A549 (cell line): ENCODE measurements at regions of chr15 and their contacts with region 1.

Region 1: GRCh38 chr15:60916679-60917460 is 312.2 kb downstream of the RORA start:
- DNase-seq: peak; percentile 35 to 80
- ATAC-seq: peak; percentile 89 to 98
- H3K4me3 ChIP-seq: no peak overlapping the region
- H3K27ac ChIP-seq: no peak overlapping the region
- H3K4me1 ChIP-seq: no peaks in the 10 kb centered on the region
- CTCF ChIP-seq: peak; percentile 86
- EP300 ChIP-seq: no peak
- POLR2A ChIP-seq: no peak
- RAD21 ChIP-seq: peak; percentile 73 to 74

Region 2: DNA sequence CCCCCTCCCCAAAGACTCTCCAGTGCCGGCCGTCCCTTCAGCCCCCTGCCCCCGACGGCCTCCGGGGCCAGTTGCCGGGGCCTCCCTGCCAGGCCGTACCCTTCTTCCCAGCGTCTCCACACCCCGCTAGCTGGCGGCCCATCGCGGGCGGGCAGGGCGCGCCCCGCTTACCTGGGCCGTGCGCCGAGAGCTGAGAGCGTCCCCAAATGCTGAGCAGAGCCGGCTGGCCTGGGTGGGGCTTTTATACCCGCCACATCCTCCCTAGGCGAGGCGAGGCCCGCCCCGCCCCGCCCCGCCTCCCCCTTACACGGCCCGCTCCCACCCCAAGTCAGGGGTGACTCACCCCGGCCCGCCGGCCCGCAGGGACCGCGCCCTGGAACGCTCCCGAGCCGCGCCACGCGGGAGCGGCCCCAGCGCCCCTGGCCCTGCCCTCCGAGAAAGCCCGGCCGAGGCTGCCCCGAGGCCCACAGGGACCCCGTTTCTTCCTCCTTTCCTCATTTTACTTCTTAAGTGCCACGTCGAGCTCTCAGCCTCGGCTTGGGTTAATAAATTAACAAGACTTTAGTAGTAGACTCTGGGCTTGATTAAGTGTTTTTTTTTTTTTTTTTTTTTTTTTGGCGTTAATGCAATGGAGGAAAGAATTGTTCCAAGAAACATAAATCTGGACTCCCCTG is 519.0 kb before region 1 on chr15 and contains the start of gene ANXA2:
- CTCF ChIA-PET with region 1: no interaction called
- POLR2A ChIA-PET with region 1: no interaction called
- DNase-seq: peak; percentile 84 to 95
- ATAC-seq: peak; percentile 62 to 72
- H3K4me3 ChIP-seq: peak within 1 kb of the TSS; percentile 88
- H3K27ac ChIP-seq: peak within 1 kb of the TSS; percentile 97 to 99
- H3K4me1 ChIP-seq: peaks cover 59% of the 10 kb centered on the region
- CTCF ChIP-seq: no peak
- EP300 ChIP-seq: peak in 1 of 2 experiments; percentile 37; a peak in 1 of 5 replicates
- POLR2A ChIP-seq: peak; percentile 92
- RAD21 ChIP-seq: no peak
- polyA plus RNA-seq, gene ANXA2: 5,725 and 5,746 TPM in 2 replicates

Region 3: GRCh38 chr15:60573936-60574335 is 342.9 kb before region 1 on chr15:
- CTCF ChIA-PET with region 1: interaction called, 12 read pairs
- POLR2A ChIA-PET with region 1: no interaction called
- DNase-seq: no peak
- ATAC-seq: no peak
- H3K4me3 ChIP-seq: no peak overlapping the region
- H3K27ac ChIP-seq: no peak overlapping the region
- H3K4me1 ChIP-seq: peaks cover 19% of the 10 kb centered on the region
- CTCF ChIP-seq: no peak
- EP300 ChIP-seq: no peak
- POLR2A ChIP-seq: no peak
- RAD21 ChIP-seq: no peak

Region 4: GRCh38 chr15:60592371-60593169 is 324.3 kb before region 1 on chr15:
- CTCF ChIA-PET with region 1: interaction called, 110 read pairs
- POLR2A ChIA-PET with region 1: no interaction called
- DNase-seq: peak; percentile 9 to 40
- ATAC-seq: peak; percentile 63 to 70
- H3K4me3 ChIP-seq: peak overlapping the region; percentile 58
- H3K27ac ChIP-seq: peak overlapping the region in 1 of 2 experiments; percentile 3; a peak in 1 of 6 replicates
- H3K4me1 ChIP-seq: peaks cover 21% of the 10 kb centered on the region
- CTCF ChIP-seq: no peak
- EP300 ChIP-seq: no peak
- POLR2A ChIP-seq: no peak
- RAD21 ChIP-seq: no peak

Region 5: GRCh38 chr15:60895986-60896385 is 20.9 kb before region 1 on chr15:
- CTCF ChIA-PET with region 1: interaction called, 80 read pairs
- POLR2A ChIA-PET with region 1: no interaction called
- DNase-seq: no peak
- ATAC-seq: no peak
- H3K4me3 ChIP-seq: no peak overlapping the region
- H3K27ac ChIP-seq: no peak overlapping the region
- H3K4me1 ChIP-seq: no peaks in the 10 kb centered on the region
- CTCF ChIP-seq: no peak
- EP300 ChIP-seq: no peak
- POLR2A ChIP-seq: no peak
- RAD21 ChIP-seq: no peak

Region 6: GRCh38 chr15:60932051-60932915 is 15.4 kb after region 1 on chr15:
- CTCF ChIA-PET with region 1: interaction called, 55 read pairs
- POLR2A ChIA-PET with region 1: no interaction called
- DNase-seq: peak; percentile 35 to 58
- ATAC-seq: peak; percentile 75 to 78
- H3K4me3 ChIP-seq: no peak overlapping the region
- H3K27ac ChIP-seq: no peak overlapping the region
- H3K4me1 ChIP-seq: no peaks in the 10 kb centered on the region
- CTCF ChIP-seq: 0 out of 3 replicates have a peak, but pooled peaks have one; percentile 22
- EP300 ChIP-seq: no peak
- POLR2A ChIP-seq: no peak
- RAD21 ChIP-seq: peak; percentile 38 to 40